ENCODE measurements at regions of chr9 and their contacts with region 1.

Region 1: GRCh38 chr9:126781186-126782052 is 23.4 kb upstream of the ZBTB43 start:
- DNase-seq: peak; percentile 65
- H3K4me3 ChIP-seq: peak overlapping the region in 1 of 3 experiments; percentile 23
- H3K27ac ChIP-seq: no peak overlapping the region
- H3K4me1 ChIP-seq: no peaks in the 10 kb centered on the region
- H3K27me3 ChIP-seq: no peaks in the 10 kb centered on the region
- CTCF ChIP-seq: peak; percentile 69 to 91

Region 2: DNA sequence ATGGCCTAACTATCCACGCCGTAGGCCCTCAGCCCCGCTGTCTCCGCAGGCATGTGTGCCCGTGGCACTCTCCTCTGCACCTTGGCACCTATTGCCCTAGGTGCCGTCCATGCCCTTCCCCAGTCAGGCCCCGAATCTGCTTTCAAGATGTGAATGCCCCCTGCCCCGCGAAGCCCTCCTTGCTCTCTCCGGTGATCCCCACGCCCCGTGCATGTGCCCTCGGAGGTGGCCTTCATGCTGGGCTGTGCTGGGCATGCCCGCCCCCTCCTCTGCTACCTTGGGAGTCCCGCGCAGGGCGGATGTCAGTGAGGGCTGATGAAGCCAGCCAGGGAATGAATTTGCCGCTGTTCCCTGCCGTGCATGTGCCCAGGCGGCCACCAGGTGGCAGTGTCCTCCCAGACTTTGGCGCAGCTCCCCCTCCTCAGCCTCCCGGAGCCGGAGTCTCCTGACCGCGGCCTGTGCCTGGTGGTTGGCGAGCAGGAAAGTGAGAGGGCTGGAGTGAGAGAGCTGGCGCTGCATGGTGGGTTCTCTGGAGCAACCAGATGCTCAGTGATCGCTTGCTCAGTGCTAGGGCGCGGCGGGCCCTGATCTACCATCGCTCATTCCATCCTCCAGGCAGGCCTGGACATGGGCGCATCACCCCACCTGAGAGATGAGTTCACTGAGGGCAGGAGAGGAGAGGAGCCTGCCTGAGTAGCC is 280.6 kb before region 1 on chr9:
- CTCF ChIA-PET with region 1: no interaction called
- dilution Hi-C with region 1: no loop called
- in situ Hi-C with region 1: loop called (anchors 10 kb)
- intact Hi-C with region 1: loop called (anchors 1 kb)
- DNase-seq: peak; percentile 62
- H3K4me3 ChIP-seq: no peak overlapping the region
- H3K27ac ChIP-seq: no peak overlapping the region
- H3K4me1 ChIP-seq: peaks cover 21% of the 10 kb centered on the region
- H3K27me3 ChIP-seq: no peaks in the 10 kb centered on the region
- CTCF ChIP-seq: peak; percentile 88 to 96

Measured in mammary epithelial cell (primary cell).